Activated CD4-positive, alpha-beta T cell treated with anti-CD3 and anti-CD28 coated beads for 36 hours (primary cell): ENCODE measurements at regions of chr12 and their contacts with region 1.

Region 1: GRCh38 chr12:120356567-120357030 is 12.4 kb downstream of the MSI1 start:
- DNase-seq: peak; percentile 88
- ATAC-seq: peak; percentile 96
- H3K4me3 Mint-ChIP-seq: no peak overlapping the region
- H3K27ac Mint-ChIP-seq: no peak overlapping the region
- H3K4me1 Mint-ChIP-seq: peaks cover 2% of the 10 kb centered on the region
- H3K27me3 Mint-ChIP-seq: peaks cover 24% of the 10 kb centered on the region

Region 2: DNA sequence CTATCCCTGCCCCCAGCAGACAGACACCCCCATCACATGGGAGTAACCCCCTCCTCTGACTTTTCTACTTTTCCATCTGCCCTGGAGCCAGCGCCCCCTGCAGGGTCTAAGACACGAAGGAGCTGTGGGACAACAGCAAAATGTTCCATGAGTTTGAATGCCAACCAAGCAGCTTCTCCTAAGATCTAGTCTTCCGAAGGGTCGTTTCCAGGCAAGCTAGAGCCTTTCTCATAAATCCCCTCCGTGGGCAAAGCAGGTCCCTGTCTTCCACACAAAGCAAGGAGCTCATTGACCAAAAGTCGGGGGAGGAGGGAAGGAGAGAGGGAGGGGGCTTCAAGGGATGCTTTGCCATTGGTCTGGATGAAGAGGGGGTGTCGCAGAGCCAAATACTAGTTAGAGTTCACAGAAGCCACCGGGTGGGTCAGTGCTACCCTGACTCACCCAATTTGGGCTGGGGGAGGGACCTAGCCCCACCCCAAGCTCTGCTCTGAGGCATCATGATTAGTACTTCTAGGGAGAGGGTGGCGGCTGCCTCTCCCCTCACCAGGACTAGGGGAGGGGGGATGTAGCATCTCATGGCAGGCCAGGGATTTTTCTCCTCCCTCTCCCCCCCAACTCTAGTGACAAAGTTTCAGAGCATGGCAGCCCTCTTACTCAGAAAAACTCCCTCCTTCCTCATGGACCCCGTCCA is 10.8 kb after region 1 on chr12:
- CTCF ChIA-PET with region 1: interaction called, 16 read pairs
- POLR2A ChIA-PET with region 1: no interaction called
- intact Hi-C with region 1: no loop called
- DNase-seq: peak; percentile 39
- ATAC-seq: peak; percentile 24
- H3K4me3 Mint-ChIP-seq: peak overlapping the region; percentile 58
- H3K27ac Mint-ChIP-seq: peak overlapping the region; percentile 62
- H3K4me1 Mint-ChIP-seq: peaks cover 16% of the 10 kb centered on the region
- H3K27me3 Mint-ChIP-seq: peaks cover 70% of the 10 kb centered on the region

Region 3: DNA sequence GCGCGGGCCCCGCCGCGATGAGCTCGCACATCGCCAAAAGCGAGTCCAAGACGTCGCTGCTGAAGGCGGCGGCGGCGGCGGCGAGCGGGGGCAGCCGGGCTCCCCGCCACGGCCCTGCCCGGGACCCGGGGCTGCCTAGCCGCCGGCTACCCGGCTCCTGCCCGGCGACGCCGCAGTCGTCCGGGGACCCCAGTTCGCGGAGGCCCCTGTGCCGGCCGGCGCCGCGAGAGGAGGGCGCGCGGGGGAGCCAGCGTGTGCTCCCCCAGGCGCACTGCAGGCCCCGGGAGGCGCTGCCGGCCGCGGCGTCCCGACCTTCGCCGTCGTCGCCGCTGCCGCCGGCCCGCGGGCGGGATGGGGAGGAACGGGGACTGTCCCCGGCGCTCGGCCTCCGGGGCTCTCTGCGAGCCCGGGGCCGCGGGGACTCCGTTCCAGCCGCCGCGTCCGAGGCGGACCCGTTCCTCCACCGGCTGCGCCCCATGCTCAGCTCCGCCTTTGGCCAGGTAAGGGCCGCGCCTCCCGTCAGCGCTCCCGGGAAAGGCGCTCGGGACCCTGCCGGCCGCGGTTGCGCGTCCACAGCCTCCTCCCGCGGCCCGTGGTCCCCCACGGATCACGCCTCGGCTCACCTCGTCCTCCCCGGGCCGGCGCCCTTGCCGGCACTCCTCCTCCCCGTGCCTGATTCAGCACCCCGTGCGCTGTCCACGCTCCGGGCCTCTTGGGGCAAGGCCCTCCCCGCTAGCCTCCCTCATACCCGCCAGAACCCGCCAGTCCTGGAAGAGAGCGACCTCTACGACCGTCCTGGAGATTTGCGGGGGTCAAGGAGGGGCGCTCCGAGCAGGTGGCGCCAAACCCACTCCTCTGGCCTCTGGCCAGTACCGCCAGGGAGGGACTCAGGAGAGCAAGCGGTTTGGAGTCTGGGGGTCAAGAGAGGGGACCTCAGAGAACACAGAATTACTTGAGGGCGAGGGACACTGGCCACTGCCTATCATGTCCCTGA is 284.5 kb after region 1 on chr12:
- CTCF ChIA-PET with region 1: no interaction called
- POLR2A ChIA-PET with region 1: no interaction called
- intact Hi-C with region 1: loop called in 1 of 2 experiments (anchors 5 kb)
- DNase-seq: peak; percentile 78
- ATAC-seq: peak; percentile 77
- H3K4me3 Mint-ChIP-seq: peak overlapping the region; percentile 63
- H3K27ac Mint-ChIP-seq: no peak overlapping the region
- H3K4me1 Mint-ChIP-seq: peaks cover 6% of the 10 kb centered on the region
- H3K27me3 Mint-ChIP-seq: peaks cover 43% of the 10 kb centered on the region